ENCODE measurements at regions of chr17 and their contacts with region 1.

Region 1: GRCh38 chr17:20226814-20227482 is 217.8 kb downstream of the SPECC1 start:
- DNase-seq: peak; percentile 80 to 86
- ATAC-seq: peak; percentile 89 to 96 (median 94)
- H3K4me3 ChIP-seq: no peak overlapping the region
- H3K27ac ChIP-seq: peak overlapping the region; percentile 50
- H3K4me1 ChIP-seq: peaks cover 3% of the 10 kb centered on the region
- H3K27me3 ChIP-seq: no peaks in the 10 kb centered on the region
- CTCF ChIP-seq: peak; percentile 78

Region 2: GRCh38 chr17:19992803-19993713 is 233.9 kb before region 1 on chr17:
- intact Hi-C with region 1: loop called in 1 of 2 experiments (anchors 5 kb)
- DNase-seq: peak; percentile 87 to 93
- ATAC-seq: peak; percentile 99 to 100 (median 99)
- H3K4me3 ChIP-seq: no peak overlapping the region
- H3K27ac ChIP-seq: no peak overlapping the region
- H3K4me1 ChIP-seq: peaks cover 4% of the 10 kb centered on the region
- H3K27me3 ChIP-seq: no peaks in the 10 kb centered on the region
- CTCF ChIP-seq: peak; percentile 79

Region 3: DNA sequence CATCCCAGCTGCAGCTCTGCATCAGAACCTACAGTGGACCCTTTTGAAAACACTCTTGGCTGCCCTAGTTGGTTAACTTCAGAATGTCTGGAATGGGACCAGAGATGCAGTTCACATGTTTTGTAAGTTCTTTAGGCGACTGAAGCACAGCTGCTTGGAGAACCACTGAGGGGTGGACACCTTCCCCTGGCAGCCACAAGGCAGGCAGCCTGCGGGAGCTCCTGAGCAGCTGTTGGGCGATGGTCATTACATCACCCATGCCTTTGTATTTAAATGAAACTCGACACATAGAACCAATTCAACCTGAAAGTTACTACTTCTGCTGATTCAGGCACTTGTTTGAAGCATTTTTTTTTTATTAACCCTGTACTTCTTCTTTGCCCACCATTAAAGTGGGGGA is 88.9 kb after region 1 on chr17:
- intact Hi-C with region 1: loop called (anchors 5 to 10 kb)
- DNase-seq: no peak
- ATAC-seq: no peak
- H3K4me3 ChIP-seq: no peak overlapping the region
- H3K27ac ChIP-seq: no peak overlapping the region
- H3K4me1 ChIP-seq: no peaks in the 10 kb centered on the region
- H3K27me3 ChIP-seq: no peaks in the 10 kb centered on the region
- CTCF ChIP-seq: no peak

Region 4: DNA sequence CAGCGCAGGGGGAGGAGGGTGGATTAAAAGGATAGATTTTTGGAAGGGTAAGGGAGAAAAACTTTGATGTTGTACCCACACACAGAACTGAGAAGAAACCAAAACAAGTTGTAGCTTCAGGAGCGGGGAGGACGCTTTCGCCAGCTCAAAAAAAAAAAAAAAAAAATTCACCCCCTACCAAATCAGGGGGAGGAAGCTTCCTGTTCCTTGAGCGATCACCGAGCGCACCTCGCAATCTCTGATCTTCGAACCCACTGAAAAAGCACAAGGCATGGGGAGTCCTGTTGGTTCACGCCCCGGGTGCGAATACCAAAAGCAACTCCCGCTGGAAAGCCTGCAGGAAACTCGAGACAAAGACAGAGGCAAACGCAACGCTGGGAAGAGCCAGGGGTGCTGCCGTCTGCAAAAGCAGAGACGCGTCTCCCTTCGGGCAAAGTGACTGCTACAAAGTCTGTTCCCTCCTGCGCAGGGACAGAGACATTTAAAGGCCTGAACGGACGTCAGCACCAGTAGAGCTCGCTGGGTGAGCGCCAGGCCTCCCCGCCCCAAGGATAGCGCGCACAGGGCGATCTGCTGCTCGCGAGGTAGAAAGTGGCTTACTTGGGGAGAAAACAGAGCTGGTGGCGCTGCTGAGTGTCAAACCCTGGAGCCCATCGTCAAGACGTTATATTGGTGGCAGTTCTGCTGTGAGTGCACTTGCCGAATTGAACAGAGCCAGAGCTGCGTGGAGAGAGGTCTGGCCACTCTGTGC is 625.5 kb after region 1 on chr17:
- intact Hi-C with region 1: loop called in 1 of 2 experiments (anchors 10 kb)
- DNase-seq: peak in 1 of 2 donors; percentile 41
- ATAC-seq: peak in 2 of 4 donors; percentile 35 to 84
- H3K4me3 ChIP-seq: peak overlapping the region; percentile 57
- H3K27ac ChIP-seq: no peak overlapping the region
- H3K4me1 ChIP-seq: peaks cover 8% of the 10 kb centered on the region
- H3K27me3 ChIP-seq: peaks cover 0 to 31% (median 2%) of the 10 kb centered on the region in 3 donors
- CTCF ChIP-seq: no peak

Region 5: GRCh38 chr17:20992987-20993862 is 766.3 kb after region 1 on chr17:
- intact Hi-C with region 1: loop called (anchors 10 kb)
- DNase-seq: peak; percentile 55 to 76
- ATAC-seq: peak; percentile 43 to 70 (median 68)
- H3K4me3 ChIP-seq: peak overlapping the region; percentile 32
- H3K27ac ChIP-seq: no peak overlapping the region
- H3K4me1 ChIP-seq: no peaks in the 10 kb centered on the region
- H3K27me3 ChIP-seq: no peaks in the 10 kb centered on the region
- CTCF ChIP-seq: peak; percentile 83